H1 (cell line): ENCODE measurements at regions of chr5 and their contacts with region 1.

Region 1: DNA sequence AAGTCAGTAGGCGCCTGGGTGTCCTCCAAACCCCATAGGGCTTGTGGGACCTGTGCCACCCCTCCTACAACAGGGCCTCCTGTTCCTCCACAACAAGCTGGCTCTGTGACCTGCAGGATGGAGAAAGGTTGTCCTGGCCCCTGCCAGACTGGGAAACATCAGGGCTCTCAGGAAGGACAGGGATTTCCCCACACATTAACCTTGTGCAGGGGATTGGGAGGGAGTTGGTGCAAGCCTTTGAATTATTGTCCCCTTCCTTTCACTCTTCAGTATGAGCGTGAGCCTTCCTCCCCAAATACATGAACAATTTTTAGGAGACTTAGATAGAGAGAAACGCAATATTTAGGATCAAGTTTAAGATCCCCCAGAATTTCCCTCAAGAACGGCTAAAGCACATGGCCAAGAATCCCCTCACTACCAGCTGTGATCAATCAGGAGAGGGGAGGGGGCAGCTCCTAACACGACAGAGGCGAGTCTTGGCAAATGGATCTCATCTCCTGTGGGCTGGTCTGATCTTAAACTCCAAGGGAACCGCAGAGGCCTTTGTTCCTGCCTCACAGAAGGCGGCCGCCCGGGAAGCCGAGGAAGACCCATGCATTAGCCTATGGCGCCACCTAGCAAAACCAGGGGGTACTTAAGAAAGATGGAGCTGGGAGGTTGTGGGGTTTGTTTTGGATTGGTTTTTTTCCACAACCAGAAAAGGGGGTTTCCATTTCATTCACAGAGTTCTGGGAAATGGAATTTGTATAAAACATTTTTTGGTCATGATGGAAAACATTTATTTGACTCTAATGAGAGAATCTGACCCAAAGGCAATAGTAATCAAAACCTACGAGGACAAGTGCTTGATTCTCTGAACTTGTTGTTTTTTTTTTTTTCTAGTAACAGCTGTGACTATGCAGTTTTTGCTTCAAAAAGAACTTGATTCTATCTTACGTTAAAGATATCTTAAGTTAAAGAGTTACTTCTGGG is 36.1 kb upstream of the OSMR start:
- DNase-seq: peak; percentile 60 to 84
- H3K4me3 ChIP-seq: no peak overlapping the region
- H3K27ac ChIP-seq: no peak overlapping the region
- H3K4me1 ChIP-seq: peaks cover 0 to 3% (median 0%) of the 10 kb centered on the region in 4 experiments; a peak in 2 of 7 replicates
- H3K27me3 ChIP-seq: peaks cover 0 to 3% (median 0%) of the 10 kb centered on the region in 4 experiments; a peak in 2 of 7 replicates
- CTCF ChIP-seq: peak; percentile 59 to 92 (median 80)
- EP300 ChIP-seq: no peak
- POLR2A ChIP-seq: no peak
- RAD21 ChIP-seq: peak; percentile 97 to 99

Region 2: DNA sequence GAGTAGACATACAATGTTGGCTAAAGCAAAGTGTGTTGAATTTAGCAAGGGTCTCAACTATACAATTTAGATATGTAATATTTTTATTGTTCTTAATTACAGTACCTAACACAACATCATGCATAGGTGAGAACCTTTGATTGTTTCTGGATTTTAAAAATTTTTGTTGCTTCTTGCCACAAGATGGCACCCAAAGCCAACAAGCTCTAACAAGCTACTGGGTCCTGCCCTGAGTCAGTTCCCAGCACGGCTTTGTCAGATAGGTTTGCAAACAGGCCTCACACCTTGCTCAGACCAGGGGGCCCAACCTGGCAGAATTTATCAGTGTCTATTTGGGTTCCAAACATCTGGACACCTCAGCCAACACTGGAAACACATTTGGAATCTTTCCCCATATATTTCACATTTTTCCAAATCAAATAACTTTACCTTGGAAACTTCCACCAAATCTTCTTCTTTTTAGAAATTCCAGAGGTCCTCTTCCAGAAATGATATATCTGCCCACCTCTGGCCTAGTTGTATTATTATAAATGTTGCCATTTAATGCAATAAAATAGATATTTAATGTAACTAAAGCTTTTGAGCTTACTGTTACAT is 600.8 kb before region 1 on chr5:
- CTCF ChIA-PET with region 1: interaction called, 15 read pairs
- POLR2A ChIA-PET with region 1: no interaction called
- DNase-seq: no peak
- H3K4me3 ChIP-seq: no peak overlapping the region
- H3K27ac ChIP-seq: no peak overlapping the region
- H3K4me1 ChIP-seq: no peaks in the 10 kb centered on the region; a peak in 1 of 7 replicates
- H3K27me3 ChIP-seq: no peaks in the 10 kb centered on the region
- CTCF ChIP-seq: peak; percentile 14 to 76 (median 63)
- EP300 ChIP-seq: no peak
- POLR2A ChIP-seq: no peak
- RAD21 ChIP-seq: peak; percentile 90 to 94

Region 3: GRCh38 chr5:38382898-38383297 is 426.8 kb before region 1 on chr5:
- CTCF ChIA-PET with region 1: interaction called, 25 read pairs
- POLR2A ChIA-PET with region 1: no interaction called
- DNase-seq: peak; percentile 69 to 78
- H3K4me3 ChIP-seq: no peak overlapping the region
- H3K27ac ChIP-seq: no peak overlapping the region
- H3K4me1 ChIP-seq: peaks cover 0 to 12% (median 7%) of the 10 kb centered on the region in 4 experiments; a peak in 3 of 7 replicates
- H3K27me3 ChIP-seq: peaks cover 0 to 3% (median 0%) of the 10 kb centered on the region in 4 experiments; a peak in 1 of 7 replicates
- CTCF ChIP-seq: peak; percentile 84 to 94 (median 89)
- EP300 ChIP-seq: no peak
- POLR2A ChIP-seq: no peak
- RAD21 ChIP-seq: peak; percentile 80 to 93

Region 4: GRCh38 chr5:38551030-38552017 is 258.4 kb before region 1 on chr5:
- CTCF ChIA-PET with region 1: interaction called, 13 read pairs
- POLR2A ChIA-PET with region 1: no interaction called
- DNase-seq: no peak
- H3K4me3 ChIP-seq: no peak overlapping the region
- H3K27ac ChIP-seq: no peak overlapping the region
- H3K4me1 ChIP-seq: peaks cover 0 to 5% (median 0%) of the 10 kb centered on the region in 4 experiments; a peak in 2 of 7 replicates
- H3K27me3 ChIP-seq: no peaks in the 10 kb centered on the region
- CTCF ChIP-seq: peak in 2 of 3 experiments; percentile 67; a peak in 3 of 4 replicates
- EP300 ChIP-seq: no peak
- POLR2A ChIP-seq: no peak
- RAD21 ChIP-seq: peak; percentile 69 to 70

Region 5: DNA sequence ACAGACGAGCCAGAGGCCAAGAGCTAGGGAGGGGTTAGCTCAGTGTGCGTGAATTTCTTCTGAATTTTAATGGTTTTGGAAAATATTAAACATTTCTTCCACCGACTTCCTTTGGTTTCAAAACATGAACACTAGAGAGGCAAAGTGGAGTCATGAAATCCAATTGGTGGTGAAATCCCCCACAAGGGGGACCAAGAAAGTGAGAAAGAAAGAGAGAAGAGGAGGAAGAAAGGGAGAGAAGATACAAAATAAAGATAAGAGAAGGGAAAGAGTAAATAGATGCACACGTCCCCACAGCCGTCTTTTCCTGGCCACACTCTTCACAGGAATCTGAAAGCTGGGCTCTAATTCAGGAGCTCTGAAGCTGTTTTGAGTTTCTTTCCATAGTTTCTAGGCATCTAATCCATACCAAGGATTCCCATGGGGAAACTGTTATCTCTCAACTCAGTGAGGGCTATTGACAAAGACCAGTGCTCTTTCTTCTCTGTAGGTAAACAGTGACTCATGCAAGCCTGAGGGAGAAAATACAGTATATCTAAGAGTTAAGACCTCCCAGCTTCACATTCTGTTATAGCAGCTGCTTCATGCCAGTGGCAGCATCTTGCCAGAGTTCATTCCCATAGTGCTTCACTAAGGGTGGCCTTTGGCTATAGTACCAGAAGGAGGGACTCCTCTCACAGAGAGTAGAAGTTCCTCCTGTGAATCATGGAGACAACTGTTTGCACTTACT is 137.4 kb before region 1 on chr5:
- CTCF ChIA-PET with region 1: interaction called, 10 read pairs
- POLR2A ChIA-PET with region 1: no interaction called
- DNase-seq: no peak
- H3K4me3 ChIP-seq: no peak overlapping the region
- H3K27ac ChIP-seq: no peak overlapping the region
- H3K4me1 ChIP-seq: no peaks in the 10 kb centered on the region
- H3K27me3 ChIP-seq: no peaks in the 10 kb centered on the region
- CTCF ChIP-seq: no peak
- EP300 ChIP-seq: no peak
- POLR2A ChIP-seq: no peak
- RAD21 ChIP-seq: no peak

Region 6: DNA sequence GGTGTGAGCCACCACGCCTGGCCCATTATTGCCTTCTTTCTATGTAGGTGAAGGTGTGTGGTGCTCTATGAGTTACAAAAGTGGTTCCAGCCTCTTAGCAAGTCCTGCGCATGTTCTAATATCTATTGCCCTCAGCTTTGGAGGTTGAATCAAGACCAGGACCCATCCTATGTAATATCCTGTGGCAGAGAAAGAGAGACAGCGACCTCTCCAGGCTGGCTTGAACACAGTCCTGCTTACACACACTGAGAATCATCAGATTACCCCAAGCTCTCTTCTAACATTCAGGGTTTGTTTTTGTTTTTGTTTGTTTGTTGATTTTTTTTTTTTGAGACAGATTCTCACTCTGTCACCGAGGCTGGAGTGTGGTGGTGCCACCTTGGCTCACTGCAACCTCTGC is 58.6 kb before region 1 on chr5:
- CTCF ChIA-PET with region 1: interaction called, 20 read pairs
- POLR2A ChIA-PET with region 1: no interaction called
- DNase-seq: no peak
- H3K4me3 ChIP-seq: no peak overlapping the region
- H3K27ac ChIP-seq: no peak overlapping the region
- H3K4me1 ChIP-seq: no peaks in the 10 kb centered on the region
- H3K27me3 ChIP-seq: no peaks in the 10 kb centered on the region
- CTCF ChIP-seq: peak; percentile 5 to 66 (median 53)
- EP300 ChIP-seq: no peak
- POLR2A ChIP-seq: no peak
- RAD21 ChIP-seq: peak; percentile 65 to 75

Region 7: DNA sequence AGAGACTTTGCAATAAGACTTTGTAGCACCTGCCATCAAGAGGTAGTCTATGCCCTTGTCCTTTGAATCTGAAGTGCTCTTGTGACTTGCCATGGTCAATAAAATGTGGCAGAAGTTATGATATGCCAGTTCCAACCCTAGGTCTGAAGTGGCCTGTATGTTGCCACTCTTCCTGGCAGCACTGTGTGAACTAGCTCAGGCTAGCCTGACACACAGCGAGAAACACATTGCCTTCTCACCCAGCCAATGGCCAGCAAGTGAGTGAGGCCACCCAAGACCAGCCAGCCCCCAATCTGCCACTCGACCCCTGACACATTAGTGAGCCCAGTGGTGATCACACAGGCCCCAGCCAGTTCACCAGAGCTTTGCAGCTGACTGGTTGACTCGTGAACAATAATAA is 16.6 kb before region 1 on chr5:
- CTCF ChIA-PET with region 1: interaction called, 37 read pairs
- POLR2A ChIA-PET with region 1: no interaction called
- DNase-seq: no peak
- H3K4me3 ChIP-seq: no peak overlapping the region
- H3K27ac ChIP-seq: no peak overlapping the region
- H3K4me1 ChIP-seq: no peaks in the 10 kb centered on the region; a peak in 1 of 7 replicates
- H3K27me3 ChIP-seq: no peaks in the 10 kb centered on the region
- CTCF ChIP-seq: no peak
- EP300 ChIP-seq: no peak
- POLR2A ChIP-seq: no peak
- RAD21 ChIP-seq: no peak